WTC11 (cell line): ENCODE measurements at regions of chr16 and their contacts with region 1.

Region 1: DNA sequence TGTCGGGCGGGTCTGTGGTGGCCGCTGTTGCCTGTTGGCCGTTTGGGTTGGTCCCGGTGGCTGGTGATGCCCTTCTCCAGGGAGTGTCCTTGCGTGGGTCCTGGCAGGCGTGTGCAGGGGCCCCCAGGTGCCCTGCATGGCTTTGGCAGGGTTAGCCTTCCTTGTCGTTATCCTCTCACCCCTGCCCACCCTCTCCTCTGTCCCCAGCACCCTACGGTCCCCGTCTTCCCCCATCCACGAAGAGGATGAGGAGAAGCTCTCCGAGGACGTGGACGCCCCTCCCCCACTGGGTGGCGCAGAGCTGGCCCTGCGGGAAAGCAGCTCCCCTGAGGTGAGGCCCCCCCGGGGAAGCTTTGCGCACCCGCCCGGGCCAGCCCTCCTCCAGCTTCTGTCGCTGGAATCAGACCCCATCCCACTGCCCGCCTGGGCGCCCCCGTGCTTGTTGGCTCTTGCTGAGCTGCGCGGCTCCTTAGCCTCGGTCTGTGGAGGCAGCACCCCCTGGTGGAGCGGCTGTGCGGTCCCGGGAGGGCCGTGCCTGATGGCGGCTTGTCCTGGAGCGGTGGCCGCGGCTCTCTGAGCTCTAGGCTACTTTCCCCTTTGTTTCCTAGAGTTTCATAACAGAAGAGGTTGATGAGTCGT is 10.6 kb upstream of the NUDT16L1 start:
- DNase-seq: peak; percentile 86
- ATAC-seq: peak; percentile 92
- H3K4me3 Mint-ChIP-seq: no peak overlapping the region
- H3K27ac Mint-ChIP-seq: no peak overlapping the region
- H3K4me1 Mint-ChIP-seq: no peaks in the 10 kb centered on the region
- H3K27me3 Mint-ChIP-seq: no peaks in the 10 kb centered on the region
- CTCF ChIP-seq: peak; percentile 49; the same call in 1 of the 2 replicates

Region 2: GRCh38 chr16:4616047-4616811 is 66.5 kb before region 1 on chr16:
- CTCF ChIA-PET with region 1: interaction called, 23 read pairs
- POLR2A ChIA-PET with region 1: no interaction called
- DNase-seq: peak; percentile 99
- ATAC-seq: peak; percentile 81
- H3K4me3 Mint-ChIP-seq: peak overlapping the region; percentile 87
- H3K27ac Mint-ChIP-seq: peak overlapping the region; percentile 100
- H3K4me1 Mint-ChIP-seq: peaks cover 38% of the 10 kb centered on the region
- H3K27me3 Mint-ChIP-seq: no peaks in the 10 kb centered on the region
- CTCF ChIP-seq: no peak

Region 3: DNA sequence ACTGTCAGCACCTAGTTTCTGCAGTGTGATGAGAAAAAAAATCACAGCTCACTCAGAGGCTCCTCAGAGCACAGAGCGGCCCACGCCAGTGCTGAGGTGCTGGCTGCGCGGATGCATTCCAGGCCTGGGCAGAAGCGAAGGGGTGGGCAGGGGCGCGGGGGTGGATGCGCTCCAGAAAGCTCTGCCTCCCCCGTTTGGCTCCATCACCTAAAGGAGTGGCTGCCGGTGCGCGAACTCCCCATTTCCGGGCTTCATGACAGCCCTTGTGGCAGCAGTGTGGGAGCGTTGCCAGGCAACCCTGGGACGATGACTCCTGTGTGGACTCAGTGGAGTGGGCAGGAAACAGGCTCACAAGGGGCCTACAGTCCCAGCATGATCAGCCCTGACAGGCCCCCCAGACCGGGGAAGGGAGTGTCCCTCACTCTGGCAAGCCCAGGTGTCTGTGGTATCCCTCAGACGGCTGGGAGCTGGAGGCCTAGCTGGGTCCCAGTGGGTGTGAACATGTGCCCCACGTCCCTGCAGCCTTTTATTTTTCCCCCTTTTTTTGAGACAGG is 22.2 kb before region 1 on chr16:
- CTCF ChIA-PET with region 1: interaction called, 12 read pairs
- POLR2A ChIA-PET with region 1: no interaction called
- DNase-seq: no peak
- ATAC-seq: no peak
- H3K4me3 Mint-ChIP-seq: no peak overlapping the region
- H3K27ac Mint-ChIP-seq: peak overlapping the region; percentile 78; the same call in 1 of the 2 replicates
- H3K4me1 Mint-ChIP-seq: peaks cover 4% of the 10 kb centered on the region
- H3K27me3 Mint-ChIP-seq: no peaks in the 10 kb centered on the region
- CTCF ChIP-seq: no peak

Region 4: GRCh38 chr16:4693296-4693955 is 10.7 kb after region 1 on chr16 and contains the start of gene NUDT16L1:
- CTCF ChIA-PET with region 1: interaction called, 63 read pairs
- POLR2A ChIA-PET with region 1: interaction called, 6 read pairs
- DNase-seq: peak; percentile 96
- ATAC-seq: peak; percentile 88
- H3K4me3 Mint-ChIP-seq: peak within 1 kb of the TSS; percentile 69
- H3K27ac Mint-ChIP-seq: peak within 1 kb of the TSS; percentile 19; the same call in 1 of the 2 replicates
- H3K4me1 Mint-ChIP-seq: no peaks in the 10 kb centered on the region
- H3K27me3 Mint-ChIP-seq: no peaks in the 10 kb centered on the region
- CTCF ChIP-seq: no peak
- total RNA-seq, gene NUDT16L1: 41.8 to 45.8 TPM (median 42.0 TPM) in 3 replicates

Region 5: GRCh38 chr16:4734063-4734729 is 51.5 kb after region 1 on chr16 and contains the starts of genes ANKS3 and DNAAF8:
- CTCF ChIA-PET with region 1: interaction called, 11 read pairs
- POLR2A ChIA-PET with region 1: interaction called, 5 read pairs
- DNase-seq: peak; percentile 95
- ATAC-seq: peak; percentile 94
- H3K4me3 Mint-ChIP-seq: peak within 1 kb of the TSS; percentile 93
- H3K27ac Mint-ChIP-seq: peak within 1 kb of the TSS; percentile 97
- H3K4me1 Mint-ChIP-seq: peaks cover 9% of the 10 kb centered on the region
- H3K27me3 Mint-ChIP-seq: peaks cover 4% of the 10 kb centered on the region; the same call in 1 of the 2 replicates
- CTCF ChIP-seq: no peak
- total RNA-seq, gene ANKS3: 28.6 to 35.6 TPM (median 31.5 TPM) in 3 replicates
- total RNA-seq, gene DNAAF8: 0.09 to 0.41 TPM (median 0.14 TPM) in 3 replicates